ENCODE measurements at regions of chr3 and their contacts with region 1.

Region 1: GRCh38 chr3:134978658-134979057 is 183.6 kb downstream of the EPHB1 start:
- DNase-seq: no peak
- ATAC-seq: peak; percentile 74
- H3K4me3 ChIP-seq: no peak overlapping the region
- H3K27ac ChIP-seq: no peak overlapping the region
- H3K4me1 ChIP-seq: no peaks in the 10 kb centered on the region
- H3K27me3 ChIP-seq: no peaks in the 10 kb centered on the region
- CTCF ChIP-seq: peak in 2 of 3 experiments; percentile 26 to 33; a peak in 2 of 6 replicates
- EP300 ChIP-seq: no peak
- POLR2A ChIP-seq: no peak
- RAD21 ChIP-seq: peak; percentile 26; the same call in 1 of the 2 replicates

Region 2: DNA sequence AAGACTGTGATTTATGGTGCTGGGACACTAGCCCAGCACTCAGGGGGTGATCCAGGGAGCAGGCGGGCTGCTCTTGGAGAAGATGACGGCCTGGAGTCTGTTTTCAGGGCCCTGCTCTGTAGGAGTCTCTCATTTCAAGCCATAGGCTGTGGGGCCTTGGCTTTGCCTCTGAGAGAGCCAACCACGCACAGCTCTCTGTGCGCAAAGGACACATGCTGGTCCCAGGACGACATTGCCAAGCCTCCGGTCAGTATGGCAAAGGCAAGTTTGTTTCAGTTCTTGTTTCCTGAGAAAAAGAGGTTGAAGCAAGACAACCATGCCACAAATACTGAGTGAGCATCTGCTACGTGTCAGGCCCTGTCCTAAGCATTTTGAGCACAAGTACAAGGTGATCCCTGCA is 13.5 kb after region 1 on chr3:
- CTCF ChIA-PET with region 1: interaction called, 4 read pairs
- POLR2A ChIA-PET with region 1: interaction called, 3 read pairs
- RAD21 ChIA-PET with region 1: interaction called, 8 read pairs
- SMC1A ChIA-PET with region 1: interaction called, 12 read pairs
- in situ Hi-C with region 1: no loop called
- intact Hi-C with region 1: no loop called
- DNase-seq: no peak
- ATAC-seq: no peak; the same call in 2 of the 3 replicates
- H3K4me3 ChIP-seq: no peak overlapping the region
- H3K27ac ChIP-seq: 0 out of 2 replicates have a peak overlapping the region, but pooled peaks have one; percentile 2
- H3K4me1 ChIP-seq: peaks cover 17% of the 10 kb centered on the region
- H3K27me3 ChIP-seq: no peaks in the 10 kb centered on the region
- CTCF ChIP-seq: no peak
- EP300 ChIP-seq: no peak
- POLR2A ChIP-seq: no peak
- RAD21 ChIP-seq: no peak

Measured in GM12878 (cell line).